MCF 10A (cell line): ENCODE measurements at regions of chr1 and their contacts with region 1.

Region 1: GRCh38 chr1:8878448-8879347 is at the start of gene ENO1:
- DNase-seq: peak; percentile 96
- H3K4me3 Mint-ChIP-seq: peak within 1 kb of the TSS; percentile 84
- H3K27ac Mint-ChIP-seq: peak within 1 kb of the TSS; percentile 94
- H3K4me1 Mint-ChIP-seq: peaks cover 26% of the 10 kb centered on the region
- H3K27me3 Mint-ChIP-seq: no peaks in the 10 kb centered on the region
- CTCF ChIP-seq: no peak
- total RNA-seq, gene ENO1: 2,592 and 2,811 TPM in 2 replicates

Region 2: DNA sequence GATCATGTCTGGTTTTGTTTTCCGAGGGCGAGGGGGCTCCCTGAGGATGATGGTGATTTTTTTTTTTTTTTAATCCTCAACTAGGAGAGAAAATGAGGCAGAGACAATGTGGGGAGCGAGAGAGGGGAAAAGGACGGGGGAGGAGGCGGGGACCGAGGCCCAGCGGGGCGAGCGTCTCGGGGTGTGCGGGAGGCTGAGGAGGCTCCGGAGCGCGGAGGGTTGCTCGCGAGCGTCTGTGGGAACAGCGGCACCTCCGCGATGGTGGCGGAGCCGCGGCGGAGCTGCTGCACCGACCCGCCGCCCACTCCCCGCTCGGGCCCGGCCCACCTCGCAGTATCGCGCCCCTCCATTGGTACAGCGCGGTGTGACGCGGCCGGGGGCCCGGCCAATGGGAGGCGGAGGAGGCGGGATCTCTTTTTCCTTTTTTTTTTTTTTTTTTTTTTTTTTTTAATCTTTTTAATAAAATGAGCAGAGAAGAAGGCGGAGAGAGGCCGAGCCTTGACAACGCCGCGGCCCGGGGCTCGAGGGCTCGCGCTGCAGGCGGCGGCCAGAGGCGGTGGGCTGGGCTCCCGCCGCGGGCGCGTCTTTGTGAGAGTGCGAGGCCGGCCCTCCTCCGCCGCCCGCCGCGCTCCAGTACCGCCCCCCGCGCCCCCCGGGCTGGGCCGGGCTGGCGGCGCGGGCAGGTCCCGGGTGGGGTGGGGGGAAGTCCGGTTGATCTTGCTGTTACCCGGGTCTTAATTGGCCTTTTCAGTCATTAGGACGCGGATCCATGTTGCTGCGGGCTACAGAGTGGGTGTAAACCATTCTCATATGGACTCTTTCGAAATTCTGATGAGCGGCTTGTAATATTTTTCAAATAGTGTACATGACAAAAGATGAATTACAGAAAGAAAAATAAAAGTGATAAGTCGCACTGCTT is 61.0 kb before region 1 on chr1 and contains the start of gene RERE:
- CTCF ChIA-PET with region 1: interaction called, 3 read pairs
- POLR2A ChIA-PET with region 1: interaction called, 29 read pairs
- intact Hi-C with region 1: no loop called
- DNase-seq: peak; percentile 93
- H3K4me3 Mint-ChIP-seq: peak within 1 kb of the TSS; percentile 84
- H3K27ac Mint-ChIP-seq: peak within 1 kb of the TSS; percentile 97
- H3K4me1 Mint-ChIP-seq: peaks cover 44% of the 10 kb centered on the region
- H3K27me3 Mint-ChIP-seq: no peaks in the 10 kb centered on the region
- CTCF ChIP-seq: no peak
- total RNA-seq, gene RERE: 36.8 and 48.4 TPM in 2 replicates

Region 3: DNA sequence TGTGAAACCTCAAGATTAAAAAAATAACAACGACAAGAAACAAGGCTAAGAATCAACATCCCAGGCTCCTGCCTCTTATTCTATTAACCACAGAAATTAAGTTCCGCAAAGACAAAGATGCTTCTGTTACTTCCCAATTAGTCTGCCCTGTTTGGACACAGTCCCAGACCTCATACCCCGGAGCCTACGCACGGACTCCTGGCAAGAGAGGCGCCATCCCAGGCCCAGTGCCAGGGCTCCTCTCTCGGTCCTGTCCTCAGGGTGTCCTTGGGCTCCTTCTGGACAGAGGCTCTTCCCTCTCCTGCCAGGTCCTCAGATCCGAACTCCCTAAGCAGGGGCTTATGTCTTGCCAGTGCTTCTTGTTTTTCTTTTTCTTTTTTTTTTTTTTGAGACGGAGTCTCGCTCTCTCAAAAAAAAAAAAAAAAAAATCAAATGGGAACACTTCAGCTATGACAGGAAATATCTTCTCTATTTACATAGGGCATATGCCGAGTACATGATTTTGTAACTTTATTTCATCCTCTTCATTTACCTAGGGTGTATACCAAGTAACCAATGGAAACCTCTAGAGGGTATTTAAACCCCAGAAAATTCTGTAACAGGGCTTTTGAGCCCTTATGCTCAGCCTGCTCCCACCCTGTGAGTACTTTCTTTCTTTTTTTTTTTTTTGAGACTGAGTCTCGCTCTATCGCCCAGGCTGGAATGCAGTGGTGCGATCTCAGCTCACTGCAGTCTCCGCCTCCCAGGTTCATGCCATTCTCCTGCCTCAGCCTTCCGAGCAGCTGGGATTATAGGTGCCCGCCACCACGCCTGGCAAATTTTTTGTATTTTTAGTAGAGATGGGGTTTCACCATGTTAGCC is 11.5 kb after region 1 on chr1:
- CTCF ChIA-PET with region 1: interaction called, 10 read pairs
- POLR2A ChIA-PET with region 1: interaction called, 63 read pairs
- intact Hi-C with region 1: loop called (anchors 1 kb)
- DNase-seq: peak; percentile 97
- H3K4me3 Mint-ChIP-seq: peak overlapping the region; percentile 67
- H3K27ac Mint-ChIP-seq: peak overlapping the region; percentile 94
- H3K4me1 Mint-ChIP-seq: peaks cover 18% of the 10 kb centered on the region
- H3K27me3 Mint-ChIP-seq: no peaks in the 10 kb centered on the region
- CTCF ChIP-seq: no peak

Region 4: GRCh38 chr1:8910914-8911313 is 32.2 kb after region 1 on chr1:
- CTCF ChIA-PET with region 1: interaction called, 4 read pairs
- POLR2A ChIA-PET with region 1: interaction called, 125 read pairs
- intact Hi-C with region 1: loop called (anchors 5 kb)
- DNase-seq: peak; percentile 44
- H3K4me3 Mint-ChIP-seq: no peak overlapping the region
- H3K27ac Mint-ChIP-seq: peak overlapping the region; percentile 75
- H3K4me1 Mint-ChIP-seq: peaks cover 24% of the 10 kb centered on the region
- H3K27me3 Mint-ChIP-seq: no peaks in the 10 kb centered on the region
- CTCF ChIP-seq: no peak

Region 5: DNA sequence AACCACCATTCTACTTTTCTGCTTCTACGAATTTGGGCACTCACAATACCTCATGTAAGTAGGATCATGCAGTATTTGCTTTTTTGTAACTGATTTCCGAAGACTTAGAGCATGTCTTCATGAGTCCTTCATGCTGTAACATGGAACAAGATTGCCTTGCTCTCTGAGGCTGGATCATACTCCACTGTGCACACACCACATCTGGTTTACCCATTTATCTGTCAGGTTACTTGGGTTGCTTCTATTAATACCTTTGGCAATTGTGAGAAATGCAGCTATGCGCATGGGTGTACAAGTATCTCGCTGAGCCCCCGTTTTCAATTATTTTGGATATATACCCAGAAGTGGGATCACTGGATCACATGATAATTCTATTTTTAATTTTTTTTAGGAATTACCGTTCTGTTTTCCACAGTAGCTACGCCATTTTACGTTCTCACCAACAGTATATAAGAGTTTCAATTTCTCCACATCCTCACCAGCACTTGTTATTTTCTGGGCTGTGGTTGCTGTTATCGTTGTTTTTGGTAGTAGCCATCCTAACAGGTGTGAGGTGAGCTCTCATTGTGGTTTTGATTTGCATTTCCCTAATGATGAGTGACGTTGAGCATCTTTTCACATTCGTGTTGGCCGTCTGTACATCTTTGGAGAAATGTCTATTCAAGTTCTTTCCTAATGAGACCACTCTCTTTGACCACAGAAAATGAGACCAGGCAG is 201.4 kb after region 1 on chr1:
- CTCF ChIA-PET with region 1: no interaction called
- POLR2A ChIA-PET with region 1: interaction called, 12 read pairs
- intact Hi-C with region 1: no loop called
- DNase-seq: no peak
- H3K4me3 Mint-ChIP-seq: peak overlapping the region; percentile 36
- H3K27ac Mint-ChIP-seq: peak overlapping the region; percentile 96
- H3K4me1 Mint-ChIP-seq: peaks cover 59% of the 10 kb centered on the region
- H3K27me3 Mint-ChIP-seq: no peaks in the 10 kb centered on the region
- CTCF ChIP-seq: no peak